OCI-LY7 (cell line): ENCODE measurements at regions of chr1 and their contacts with region 1.

Region 1: GRCh38 chr1:100213141-100213540 is 35.1 kb upstream of the LRRC39 start:
- DNase-seq: no peak
- H3K4me3 ChIP-seq: no peak overlapping the region
- H3K27ac ChIP-seq: no peak overlapping the region
- H3K4me1 ChIP-seq: no peaks in the 10 kb centered on the region
- CTCF ChIP-seq: no peak

Region 2: DNA sequence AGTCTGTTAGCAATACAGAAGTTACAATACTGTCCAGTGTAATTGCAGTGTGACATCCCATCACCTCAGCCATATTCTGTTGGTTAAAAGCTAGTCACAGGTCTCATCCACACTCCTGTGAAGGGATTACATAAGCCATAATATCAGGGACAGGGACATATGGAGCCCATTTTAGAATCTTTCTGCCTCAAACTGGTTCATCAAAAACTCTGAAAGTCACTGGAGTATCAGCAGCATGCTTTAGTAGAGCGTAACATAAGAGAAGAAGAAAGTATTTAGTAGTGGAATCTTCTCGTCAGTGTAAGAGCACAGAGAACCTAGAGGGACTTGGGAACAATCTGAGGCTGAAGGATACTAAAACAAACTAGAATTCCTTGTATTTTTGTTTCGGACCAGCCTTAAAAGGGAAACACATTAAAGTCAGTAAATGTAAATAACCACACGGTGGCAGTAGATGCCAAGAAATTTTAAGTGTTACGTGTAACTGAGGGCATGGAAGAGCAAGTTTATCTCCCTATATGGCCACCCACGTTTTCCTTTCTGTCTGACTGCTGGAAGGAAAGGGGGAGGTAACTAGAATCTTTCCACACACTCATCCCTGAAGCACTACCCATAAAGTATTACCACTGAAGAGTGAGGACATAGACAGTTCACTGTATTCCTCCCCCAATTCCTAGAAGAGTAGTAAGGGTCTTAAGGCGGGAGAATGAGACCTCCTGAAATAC is 404.6 kb before region 1 on chr1:
- CTCF ChIA-PET with region 1: no interaction called
- POLR2A ChIA-PET with region 1: no interaction called
- intact Hi-C with region 1: no loop called
- DNase-seq: peak; percentile 84
- H3K4me3 ChIP-seq: no peak overlapping the region
- H3K27ac ChIP-seq: no peak overlapping the region
- H3K4me1 ChIP-seq: peaks cover 5% of the 10 kb centered on the region
- CTCF ChIP-seq: peak; percentile 87

Region 3: DNA sequence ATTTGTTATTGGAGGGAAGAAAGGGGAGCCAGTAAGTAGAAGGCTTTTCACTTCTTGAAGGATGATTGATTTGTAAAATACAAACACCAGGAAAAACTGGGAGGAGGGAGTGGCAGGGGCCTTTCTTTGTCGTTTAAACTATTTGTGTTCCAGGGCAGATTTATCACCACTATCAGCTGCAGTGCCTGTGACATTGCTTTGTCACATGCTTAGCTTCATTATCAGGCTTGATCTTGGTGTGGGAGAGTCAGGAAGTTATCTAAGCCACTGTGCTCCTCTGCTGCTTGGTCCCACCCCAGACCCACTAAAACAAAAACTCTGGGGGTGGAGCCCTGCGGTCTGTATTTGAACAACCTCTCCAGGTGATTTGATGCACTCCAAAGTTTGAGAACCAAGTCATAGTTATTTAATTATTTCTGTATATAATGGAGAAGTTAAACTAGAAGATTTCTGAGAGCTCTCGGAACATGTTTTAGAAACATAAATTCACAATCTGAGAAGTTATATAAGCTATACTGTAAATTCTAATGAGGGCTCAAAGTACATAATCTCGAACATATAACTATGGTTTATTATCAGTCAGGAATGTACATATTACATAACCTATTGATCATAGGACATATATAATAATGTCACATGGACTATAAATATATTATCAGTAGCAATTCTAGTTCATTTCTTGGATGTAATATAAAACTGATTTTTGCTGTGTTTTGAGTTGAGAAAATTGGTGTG is 227.1 kb after region 1 on chr1:
- CTCF ChIA-PET with region 1: no interaction called
- POLR2A ChIA-PET with region 1: interaction called, 11 read pairs
- intact Hi-C with region 1: no loop called
- DNase-seq: no peak
- H3K4me3 ChIP-seq: no peak overlapping the region
- H3K27ac ChIP-seq: no peak overlapping the region
- H3K4me1 ChIP-seq: peaks cover 18% of the 10 kb centered on the region
- CTCF ChIP-seq: no peak